Gastrocnemius medialis (tissue), 4 donors: ENCODE measurements at regions of chr15 and their contacts with region 1.

Region 1: DNA sequence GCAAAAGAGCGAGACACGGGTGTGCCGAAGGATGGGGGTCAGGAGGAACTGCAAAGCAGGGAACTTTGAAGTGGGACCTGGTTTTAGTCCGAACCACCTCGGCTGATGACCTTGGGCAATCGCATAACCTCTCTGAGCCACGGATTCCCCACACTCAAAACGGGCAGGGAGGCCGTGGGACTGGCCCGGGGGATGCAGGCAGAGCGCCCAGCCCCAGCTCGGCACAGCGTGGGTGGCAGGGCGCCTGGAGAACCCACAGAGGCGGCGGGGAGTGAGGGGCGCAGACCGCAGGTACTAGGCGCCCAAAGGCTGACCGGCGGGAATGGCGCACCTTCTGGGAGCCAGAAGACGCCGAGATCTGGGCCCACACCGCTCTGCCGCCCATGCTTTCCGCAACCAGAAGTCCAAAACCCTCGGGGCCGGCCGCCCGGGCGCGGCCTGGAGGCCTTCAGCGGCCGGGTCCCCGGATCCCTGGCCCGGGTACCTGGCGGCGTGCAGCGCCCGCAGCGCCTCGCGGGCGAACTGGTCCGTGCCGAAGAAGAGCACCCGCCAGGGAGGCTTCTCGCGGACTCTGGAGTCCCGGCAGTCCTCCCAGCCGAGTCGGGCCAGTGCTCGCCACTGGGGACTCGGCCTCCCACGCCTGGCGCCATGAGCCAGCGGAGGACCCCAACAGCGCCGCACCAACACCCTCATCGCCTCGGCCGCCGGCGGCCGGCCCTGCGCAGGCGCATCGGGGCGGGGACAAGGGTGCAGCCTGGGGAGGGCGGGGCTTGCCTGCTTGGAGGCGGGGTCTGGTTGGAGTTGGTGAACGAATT is at the start of gene MTFMT:
- DNase-seq: peak; percentile 75 to 84
- ATAC-seq: peak; percentile 90 to 94
- H3K4me3 ChIP-seq: peak within 1 kb of the TSS; percentile 79 to 95 (median 88)
- H3K27ac ChIP-seq: peak within 1 kb of the TSS; percentile 71 to 92 (median 88)
- H3K4me1 ChIP-seq: peaks cover 16 to 19% of the 10 kb centered on the region in 2 donors
- H3K27me3 ChIP-seq: no peaks in the 10 kb centered on the region
- CTCF ChIP-seq: no peak
- POLR2A ChIP-seq: peak; percentile 93 to 95
- total RNA-seq, gene MTFMT: 17.3 to 34.0 (median 27.9) TPM

Region 2: GRCh38 chr15:64856429-64857145 is 172.5 kb before region 1 on chr15:
- in situ Hi-C with region 1: no loop called
- intact Hi-C with region 1: no loop called
- DNase-seq: no peak
- ATAC-seq: peak in 1 of 2 donors; percentile 12
- H3K4me3 ChIP-seq: no peak overlapping the region
- H3K27ac ChIP-seq: peak overlapping the region; percentile 16 to 59 (median 43)
- H3K4me1 ChIP-seq: peaks cover 20 to 31% of the 10 kb centered on the region in 2 donors
- H3K27me3 ChIP-seq: no peaks in the 10 kb centered on the region
- CTCF ChIP-seq: no peak
- POLR2A ChIP-seq: no peak

Region 3: DNA sequence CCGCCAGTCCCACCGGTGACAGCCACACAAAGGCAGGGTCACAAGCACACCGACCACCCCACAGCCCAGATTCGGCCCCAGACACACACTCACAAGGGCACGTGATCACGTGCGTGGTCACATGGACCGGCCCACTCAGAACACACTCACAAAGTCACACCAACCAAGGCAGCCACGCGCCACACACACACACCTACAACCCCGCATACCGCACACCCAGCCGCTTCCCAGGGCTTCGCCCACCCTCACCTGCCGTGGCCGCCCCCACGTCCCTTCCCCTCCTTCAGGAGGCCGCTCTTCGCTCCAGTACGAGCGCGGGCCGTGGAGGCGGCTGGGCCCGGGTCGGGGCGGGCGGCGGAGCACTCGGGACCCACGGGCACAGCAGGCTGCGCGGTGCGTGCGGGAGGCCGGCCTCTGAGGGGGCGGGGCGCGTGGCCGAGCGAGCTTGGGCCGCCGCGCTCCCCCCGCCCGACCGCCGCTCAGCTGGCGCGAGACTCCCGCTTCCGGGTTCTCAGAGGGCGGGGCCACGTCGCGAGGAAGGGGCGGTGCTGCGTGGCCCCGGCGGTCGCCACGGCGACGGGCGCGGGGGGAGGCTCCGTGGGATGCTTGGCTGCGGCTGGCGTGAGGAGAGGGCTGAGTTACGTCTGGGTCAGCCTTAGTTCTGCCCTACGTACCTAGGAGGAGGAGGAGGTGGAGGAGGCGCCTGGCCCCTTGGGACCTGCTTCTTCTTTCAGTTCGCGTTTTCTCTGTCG is 39.5 kb before region 1 on chr15 and contains the start of gene SPG21:
- in situ Hi-C with region 1: no loop called
- intact Hi-C with region 1: loop called (anchors 2 kb)
- DNase-seq: peak; percentile 76 to 82
- ATAC-seq: peak; percentile 89 to 90
- H3K4me3 ChIP-seq: peak within 1 kb of the TSS; percentile 79 to 100 (median 98)
- H3K27ac ChIP-seq: peak within 1 kb of the TSS; percentile 91 to 99 (median 99)
- H3K4me1 ChIP-seq: peaks cover 8 to 22% of the 10 kb centered on the region in 2 donors
- H3K27me3 ChIP-seq: no peaks in the 10 kb centered on the region
- CTCF ChIP-seq: no peak
- POLR2A ChIP-seq: peak; percentile 73 to 81
- total RNA-seq, gene SPG21: 61.9 to 84.4 (median 72.5) TPM

Region 4: GRCh38 chr15:65044724-65045481 is 15.8 kb after region 1 on chr15 and contains the start of gene SLC51B:
- in situ Hi-C with region 1: no loop called
- intact Hi-C with region 1: no loop called
- DNase-seq: no peak
- ATAC-seq: peak; percentile 29 to 35
- H3K4me3 ChIP-seq: no peak within 1 kb of the TSS
- H3K27ac ChIP-seq: peak within 1 kb of the TSS in 1 of 4 donors; percentile 13
- H3K4me1 ChIP-seq: peaks cover 20 to 22% of the 10 kb centered on the region in 2 donors
- H3K27me3 ChIP-seq: no peaks in the 10 kb centered on the region
- CTCF ChIP-seq: no peak
- POLR2A ChIP-seq: no peak
- total RNA-seq, gene SLC51B: not detected

Region 5: DNA sequence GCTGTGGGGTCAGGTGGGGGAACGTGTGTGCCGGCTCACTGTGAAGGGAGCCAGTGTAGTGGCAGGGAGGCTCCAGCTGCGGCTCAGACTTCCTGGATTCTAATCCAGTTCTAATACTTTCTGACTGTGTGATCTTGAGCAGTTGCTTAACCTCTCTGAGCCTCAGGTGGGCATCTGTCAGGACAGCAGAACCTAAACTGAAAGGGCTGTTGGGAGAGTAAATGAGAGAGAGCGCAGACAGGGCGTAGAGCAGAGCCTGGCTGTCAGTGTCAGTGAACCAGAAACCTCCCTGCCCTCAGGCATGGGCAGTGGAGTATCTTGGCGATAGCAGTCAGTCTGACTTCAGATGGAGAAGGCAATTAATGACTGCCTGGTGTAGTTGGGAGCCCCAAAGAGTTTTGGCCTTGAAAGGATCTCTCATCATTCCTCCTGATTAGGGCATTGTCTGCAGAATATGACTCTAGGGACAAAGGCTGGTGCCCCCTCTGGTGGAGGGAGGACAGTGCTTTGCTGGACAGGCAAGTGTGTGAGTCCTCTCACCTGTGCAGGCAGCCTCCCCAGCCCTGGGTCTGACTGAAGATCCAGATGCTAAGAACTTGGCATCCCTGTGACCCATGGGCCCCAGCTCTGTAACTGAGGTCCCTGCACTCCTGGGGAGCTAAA is 57.0 kb after region 1 on chr15:
- in situ Hi-C with region 1: loop called in 2 of 4 experiments (anchors 10 kb)
- intact Hi-C with region 1: no loop called
- DNase-seq: no peak
- ATAC-seq: no peak
- H3K4me3 ChIP-seq: no peak overlapping the region
- H3K27ac ChIP-seq: peak overlapping the region in 1 of 4 donors; percentile 81
- H3K4me1 ChIP-seq: peaks cover 41 to 42% of the 10 kb centered on the region in 2 donors
- H3K27me3 ChIP-seq: no peaks in the 10 kb centered on the region
- CTCF ChIP-seq: peak in 3 of 5 experiments; percentile 26 to 44 (median 36)
- POLR2A ChIP-seq: no peak

Region 6: DNA sequence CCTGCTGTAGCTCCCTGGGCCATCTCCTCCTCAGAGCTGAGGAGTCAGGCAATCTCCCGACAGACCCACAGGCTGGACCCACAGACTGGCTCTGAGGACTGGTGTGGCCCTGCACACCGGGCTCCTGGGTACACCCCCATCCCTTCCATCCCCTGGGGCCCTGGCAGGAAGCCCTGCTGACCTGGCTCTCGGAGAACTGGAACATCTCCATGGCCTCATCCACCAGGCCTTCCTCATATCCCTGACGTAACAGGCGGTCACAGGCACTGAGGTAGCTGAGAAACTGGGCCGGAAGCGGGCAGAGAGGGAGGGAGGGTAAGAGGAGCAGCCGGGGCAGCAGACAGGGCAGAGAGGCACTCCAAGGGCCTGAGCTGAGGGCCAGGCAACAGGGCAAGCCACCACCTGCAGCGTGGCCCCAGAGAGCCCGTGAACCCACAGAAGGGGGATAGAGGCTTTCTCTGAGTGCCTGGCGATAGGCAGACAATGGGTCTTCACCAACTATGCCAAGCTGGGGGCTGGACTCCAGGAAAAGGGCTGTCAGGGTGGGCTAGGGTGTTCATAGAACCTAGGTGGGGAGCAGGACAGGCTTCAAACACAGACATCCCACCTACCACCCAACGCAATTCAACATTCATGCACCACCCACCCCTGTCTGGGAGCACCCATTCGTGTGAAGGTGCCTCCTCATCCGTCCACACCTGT is 65.3 kb after region 1 on chr15:
- in situ Hi-C with region 1: loop called in 2 of 4 experiments (anchors 10 kb)
- intact Hi-C with region 1: no loop called
- DNase-seq: no peak
- ATAC-seq: no peak
- H3K4me3 ChIP-seq: no peak overlapping the region
- H3K27ac ChIP-seq: no peak overlapping the region
- H3K4me1 ChIP-seq: peaks cover 6 to 11% of the 10 kb centered on the region in 2 donors
- H3K27me3 ChIP-seq: no peaks in the 10 kb centered on the region
- CTCF ChIP-seq: no peak
- POLR2A ChIP-seq: no peak

Region 7: GRCh38 chr15:65249641-65250040 is 220.5 kb after region 1 on chr15:
- in situ Hi-C with region 1: loop called in 1 of 4 experiments (anchors 25 kb)
- intact Hi-C with region 1: no loop called
- DNase-seq: no peak
- ATAC-seq: no peak
- H3K4me3 ChIP-seq: no peak overlapping the region
- H3K27ac ChIP-seq: no peak overlapping the region
- H3K4me1 ChIP-seq: peaks cover 0 to 4% of the 10 kb centered on the region in 2 donors
- H3K27me3 ChIP-seq: no peaks in the 10 kb centered on the region
- CTCF ChIP-seq: no peak
- POLR2A ChIP-seq: no peak

Region 8: GRCh38 chr15:65286704-65287519 is 257.8 kb after region 1 on chr15 and contains the start of gene PARP16:
- in situ Hi-C with region 1: loop called in 3 of 4 experiments (anchors 25 kb)
- intact Hi-C with region 1: no loop called
- DNase-seq: peak; percentile 89 to 92
- ATAC-seq: peak; percentile 90
- H3K4me3 ChIP-seq: peak within 1 kb of the TSS; percentile 74 to 91 (median 87)
- H3K27ac ChIP-seq: peak within 1 kb of the TSS; percentile 96 to 99 (median 98)
- H3K4me1 ChIP-seq: peaks cover 9 to 11% of the 10 kb centered on the region in 2 donors
- H3K27me3 ChIP-seq: no peaks in the 10 kb centered on the region
- CTCF ChIP-seq: peak in 4 of 5 experiments; percentile 43 to 83 (median 71)
- POLR2A ChIP-seq: peak; percentile 85 to 92
- total RNA-seq, gene PARP16: 2.6 to 3.3 (median 3.0) TPM